H1 (cell line): ENCODE measurements at regions of chr3 and their contacts with region 1.

Region 1: GRCh38 chr3:119145500-119146191 is at the start of gene TEX55:
- DNase-seq: peak in 1 of 2 experiments; percentile 59
- H3K4me3 ChIP-seq: no peak within 1 kb of the TSS
- H3K27ac ChIP-seq: no peak within 1 kb of the TSS
- H3K4me1 ChIP-seq: no peaks in the 10 kb centered on the region
- H3K27me3 ChIP-seq: peaks cover 0 to 2% (median 0%) of the 10 kb centered on the region in 4 experiments; a peak in 3 of 7 replicates
- CTCF ChIP-seq: peak; percentile 3 to 84 (median 61)
- EP300 ChIP-seq: no peak
- POLR2A ChIP-seq: no peak
- RAD21 ChIP-seq: peak; percentile 70 to 74
- total RNA-seq, gene TEX55: not detected in 2 replicates

Region 2: DNA sequence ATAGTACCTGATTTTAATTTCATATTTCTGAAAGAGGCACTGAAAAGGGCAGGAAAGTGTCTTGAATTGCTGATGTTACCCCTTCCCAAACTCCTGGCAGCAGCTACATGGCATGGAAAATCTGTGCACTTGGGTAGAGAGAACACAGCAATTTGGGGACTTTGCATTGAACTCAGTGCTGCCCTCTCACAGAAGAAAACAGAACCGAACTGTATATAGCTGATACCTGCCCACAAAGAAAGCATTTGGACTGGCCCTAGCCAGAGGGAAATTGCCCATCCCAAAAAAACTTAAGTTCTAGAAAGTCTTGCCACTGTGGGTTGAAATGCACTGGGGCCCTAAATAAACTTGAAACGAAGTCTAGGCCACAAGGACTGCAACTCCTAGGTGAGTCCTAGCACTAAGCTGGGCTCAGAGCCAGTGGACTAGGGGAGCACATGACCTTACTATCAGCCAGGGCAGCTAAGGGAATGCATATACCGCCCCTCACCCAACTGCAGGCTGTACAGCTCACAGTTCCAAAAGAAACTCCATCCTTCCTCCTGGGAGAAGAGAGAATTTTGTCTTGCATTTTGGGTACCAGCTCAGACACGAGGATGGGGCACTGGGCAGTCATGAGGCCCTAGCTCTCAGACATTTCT is 23.4 kb before region 1 on chr3:
- CTCF ChIA-PET with region 1: interaction called, 19 read pairs
- POLR2A ChIA-PET with region 1: interaction called, 3 read pairs
- DNase-seq: no peak
- H3K4me3 ChIP-seq: no peak overlapping the region
- H3K27ac ChIP-seq: no peak overlapping the region
- H3K4me1 ChIP-seq: peaks cover 1 to 7% (median 3%) of the 10 kb centered on the region in 4 experiments; a peak in 5 of 7 replicates
- H3K27me3 ChIP-seq: no peaks in the 10 kb centered on the region
- CTCF ChIP-seq: peak in 1 of 3 experiments; percentile 15; a peak in 1 of 4 replicates
- EP300 ChIP-seq: no peak
- POLR2A ChIP-seq: no peak
- RAD21 ChIP-seq: peak in 1 of 2 experiments; percentile 16; a peak in 1 of 4 replicates

Region 3: GRCh38 chr3:119156868-119157267 is 11.2 kb after region 1 on chr3:
- CTCF ChIA-PET with region 1: interaction called, 19 read pairs
- POLR2A ChIA-PET with region 1: no interaction called
- DNase-seq: no peak
- H3K4me3 ChIP-seq: no peak overlapping the region
- H3K27ac ChIP-seq: no peak overlapping the region
- H3K4me1 ChIP-seq: no peaks in the 10 kb centered on the region
- H3K27me3 ChIP-seq: no peaks in the 10 kb centered on the region
- CTCF ChIP-seq: no peak
- EP300 ChIP-seq: no peak
- POLR2A ChIP-seq: no peak
- RAD21 ChIP-seq: no peak